Activated CD8-positive, alpha-beta memory T cell treated with anti-CD3 and anti-CD28 coated beads, Interleukin-2, amount 10 ng/mL, durations not matched to agents 7 days and 5 days (primary cell): ENCODE measurements at regions of chr6 and their contacts with region 1.

Region 1: GRCh38 chr6:83067448-83068413 is at the start of gene DOP1A:
- DNase-seq: peak; percentile 97
- ATAC-seq: peak; percentile 88
- H3K4me3 Mint-ChIP-seq: peak within 1 kb of the TSS; percentile 82
- H3K27ac Mint-ChIP-seq: peak within 1 kb of the TSS; percentile 85
- H3K4me1 Mint-ChIP-seq: peaks cover 44% of the 10 kb centered on the region
- H3K27me3 Mint-ChIP-seq: no peaks in the 10 kb centered on the region
- total RNA-seq, gene DOP1A: 22.0 to 34.7 TPM

Region 2: GRCh38 chr6:82247634-82248232 is 820.0 kb before region 1 on chr6 and contains the start of gene IBTK:
- CTCF ChIA-PET with region 1: interaction called, 27 read pairs
- DNase-seq: peak; percentile 94
- ATAC-seq: peak; percentile 92
- H3K4me3 Mint-ChIP-seq: peak within 1 kb of the TSS; percentile 89
- H3K27ac Mint-ChIP-seq: peak within 1 kb of the TSS; percentile 90
- H3K4me1 Mint-ChIP-seq: peaks cover 30% of the 10 kb centered on the region
- H3K27me3 Mint-ChIP-seq: no peaks in the 10 kb centered on the region
- total RNA-seq, gene IBTK: 25.8 to 34.2 TPM

Region 3: GRCh38 chr6:83086751-83087150 is 19.0 kb after region 1 on chr6:
- CTCF ChIA-PET with region 1: interaction called, 97 read pairs
- DNase-seq: no peak
- ATAC-seq: peak; percentile 93
- H3K4me3 Mint-ChIP-seq: peak overlapping the region; percentile 81
- H3K27ac Mint-ChIP-seq: peak overlapping the region; percentile 91
- H3K4me1 Mint-ChIP-seq: peaks cover 41% of the 10 kb centered on the region
- H3K27me3 Mint-ChIP-seq: no peaks in the 10 kb centered on the region

Region 4: DNA sequence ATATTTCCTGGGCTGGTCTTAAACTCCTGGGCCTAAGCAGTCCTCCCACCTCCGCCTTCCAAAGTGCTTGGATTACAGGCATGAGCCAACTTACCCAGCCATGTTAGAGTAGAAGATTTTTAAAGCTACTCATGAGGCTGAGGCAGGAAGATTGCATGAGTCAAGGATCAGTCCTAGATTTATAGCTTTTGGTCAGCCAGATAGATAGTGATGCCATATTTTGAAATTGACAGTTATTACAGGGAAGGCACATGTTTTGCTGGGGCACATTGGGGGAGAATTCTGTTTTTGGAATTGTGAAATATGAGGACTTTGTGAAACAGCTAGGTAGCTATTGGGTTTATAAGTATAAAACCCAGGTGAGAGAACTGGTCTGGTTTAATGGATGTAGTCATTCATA is 40.6 kb after region 1 on chr6:
- CTCF ChIA-PET with region 1: interaction called, 10 read pairs
- DNase-seq: no peak
- ATAC-seq: no peak
- H3K4me3 Mint-ChIP-seq: no peak overlapping the region
- H3K27ac Mint-ChIP-seq: no peak overlapping the region
- H3K4me1 Mint-ChIP-seq: no peaks in the 10 kb centered on the region
- H3K27me3 Mint-ChIP-seq: no peaks in the 10 kb centered on the region

Region 5: GRCh38 chr6:83183082-83183828 is 115.5 kb after region 1 on chr6:
- CTCF ChIA-PET with region 1: interaction called, 44 read pairs
- DNase-seq: no peak
- ATAC-seq: no peak
- H3K4me3 Mint-ChIP-seq: no peak overlapping the region
- H3K27ac Mint-ChIP-seq: no peak overlapping the region
- H3K4me1 Mint-ChIP-seq: peaks cover 4% of the 10 kb centered on the region
- H3K27me3 Mint-ChIP-seq: no peaks in the 10 kb centered on the region

Region 6: GRCh38 chr6:83199173-83199862 is 131.6 kb after region 1 on chr6:
- CTCF ChIA-PET with region 1: interaction called, 34 read pairs
- DNase-seq: no peak
- ATAC-seq: no peak
- H3K4me3 Mint-ChIP-seq: no peak overlapping the region
- H3K27ac Mint-ChIP-seq: no peak overlapping the region
- H3K4me1 Mint-ChIP-seq: peaks cover 3% of the 10 kb centered on the region
- H3K27me3 Mint-ChIP-seq: peaks cover 6% of the 10 kb centered on the region

Region 7: DNA sequence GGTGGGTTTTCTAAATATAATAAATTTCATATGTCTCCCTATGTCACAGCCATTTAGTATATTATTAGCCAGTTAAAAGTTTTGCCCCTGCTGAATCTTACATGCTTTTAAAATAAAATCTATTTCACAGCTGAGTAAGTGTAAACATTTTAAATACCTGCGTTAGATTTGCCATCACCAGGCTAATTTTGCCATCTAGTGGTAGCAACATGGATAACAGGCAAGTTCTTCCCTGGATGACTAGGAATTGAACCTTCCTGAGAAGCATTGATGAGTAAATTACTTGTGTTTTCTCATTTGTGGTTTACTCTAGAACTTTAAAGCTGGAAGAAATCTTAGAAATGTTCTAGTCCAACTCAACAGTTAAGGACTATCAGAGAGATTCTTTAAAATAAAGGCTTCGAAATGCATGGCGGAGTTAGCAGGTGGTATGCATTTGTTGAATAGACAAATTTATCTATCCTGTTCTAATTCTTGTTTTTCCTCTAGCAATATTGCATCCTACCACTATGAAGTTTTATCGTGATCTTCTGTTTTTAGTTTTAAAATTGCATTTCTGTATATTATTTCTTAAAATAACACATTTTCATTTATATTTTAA is 447.2 kb after region 1 on chr6:
- CTCF ChIA-PET with region 1: interaction called, 48 read pairs
- DNase-seq: no peak
- ATAC-seq: no peak
- H3K4me3 Mint-ChIP-seq: no peak overlapping the region
- H3K27ac Mint-ChIP-seq: no peak overlapping the region
- H3K4me1 Mint-ChIP-seq: peaks cover 7% of the 10 kb centered on the region
- H3K27me3 Mint-ChIP-seq: peaks cover 39% of the 10 kb centered on the region